ENCODE measurements at regions of chr15 and their contacts with region 1.

Region 1: DNA sequence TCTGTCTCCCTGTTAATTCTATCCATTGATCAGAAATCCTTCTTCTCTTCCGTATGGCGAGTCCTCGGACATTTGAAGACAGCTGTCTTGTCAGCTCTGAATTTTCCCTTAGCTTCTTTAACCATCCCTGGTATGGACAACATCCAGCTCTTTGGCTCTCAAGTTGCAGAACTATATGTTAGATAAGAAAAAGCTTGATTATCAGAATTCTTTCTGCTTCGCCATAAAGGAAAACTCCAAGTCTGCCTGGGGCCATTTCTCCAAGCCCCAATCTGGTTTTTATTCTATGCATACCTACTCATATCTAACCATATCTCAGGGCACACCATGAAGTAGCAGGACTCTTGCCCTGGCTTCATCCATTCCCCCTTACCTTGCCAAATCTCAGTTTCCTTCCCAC is 215.7 kb upstream of the TMC3 start:
- DNase-seq: no peak
- H3K4me3 ChIP-seq: no peak overlapping the region
- H3K27ac ChIP-seq: no peak overlapping the region
- H3K4me1 ChIP-seq: no peaks in the 10 kb centered on the region
- H3K27me3 ChIP-seq: no peaks in the 10 kb centered on the region
- CTCF ChIP-seq: no peak

Region 2: GRCh38 chr15:81555346-81555745 is 34.3 kb before region 1 on chr15:
- CTCF ChIA-PET with region 1: interaction called, 14 read pairs
- POLR2A ChIA-PET with region 1: no interaction called
- intact Hi-C with region 1: no loop called
- DNase-seq: no peak
- H3K4me3 ChIP-seq: no peak overlapping the region
- H3K27ac ChIP-seq: no peak overlapping the region
- H3K4me1 ChIP-seq: no peaks in the 10 kb centered on the region
- H3K27me3 ChIP-seq: no peaks in the 10 kb centered on the region
- CTCF ChIP-seq: no peak

Measured in A673 (cell line).